OCI-LY7 (cell line): ENCODE measurements at regions of chr3 and their contacts with region 1.

Region 1: GRCh38 chr3:188262913-188263683 is 109.1 kb downstream of the LPP start:
- DNase-seq: no peak
- H3K4me3 ChIP-seq: no peak overlapping the region
- H3K27ac ChIP-seq: no peak overlapping the region
- H3K4me1 ChIP-seq: peaks cover 2% of the 10 kb centered on the region
- CTCF ChIP-seq: no peak

Region 2: GRCh38 chr3:188137051-188137450 is 126.0 kb before region 1 on chr3:
- CTCF ChIA-PET with region 1: no interaction called
- POLR2A ChIA-PET with region 1: no interaction called
- intact Hi-C with region 1: no loop called
- DNase-seq: peak; percentile 49
- H3K4me3 ChIP-seq: no peak overlapping the region
- H3K27ac ChIP-seq: no peak overlapping the region
- H3K4me1 ChIP-seq: peaks cover 14% of the 10 kb centered on the region
- CTCF ChIP-seq: no peak

Region 3: GRCh38 chr3:188283347-188283746 is 20.2 kb after region 1 on chr3:
- CTCF ChIA-PET with region 1: no interaction called
- POLR2A ChIA-PET with region 1: interaction called, 19 read pairs
- intact Hi-C with region 1: no loop called
- DNase-seq: peak; percentile 18
- H3K4me3 ChIP-seq: no peak overlapping the region
- H3K27ac ChIP-seq: no peak overlapping the region
- H3K4me1 ChIP-seq: peaks cover 48% of the 10 kb centered on the region
- CTCF ChIP-seq: peak; percentile 42